HCT116 (cell line): ENCODE measurements at regions of chr14 and their contacts with region 1.

Region 1: DNA sequence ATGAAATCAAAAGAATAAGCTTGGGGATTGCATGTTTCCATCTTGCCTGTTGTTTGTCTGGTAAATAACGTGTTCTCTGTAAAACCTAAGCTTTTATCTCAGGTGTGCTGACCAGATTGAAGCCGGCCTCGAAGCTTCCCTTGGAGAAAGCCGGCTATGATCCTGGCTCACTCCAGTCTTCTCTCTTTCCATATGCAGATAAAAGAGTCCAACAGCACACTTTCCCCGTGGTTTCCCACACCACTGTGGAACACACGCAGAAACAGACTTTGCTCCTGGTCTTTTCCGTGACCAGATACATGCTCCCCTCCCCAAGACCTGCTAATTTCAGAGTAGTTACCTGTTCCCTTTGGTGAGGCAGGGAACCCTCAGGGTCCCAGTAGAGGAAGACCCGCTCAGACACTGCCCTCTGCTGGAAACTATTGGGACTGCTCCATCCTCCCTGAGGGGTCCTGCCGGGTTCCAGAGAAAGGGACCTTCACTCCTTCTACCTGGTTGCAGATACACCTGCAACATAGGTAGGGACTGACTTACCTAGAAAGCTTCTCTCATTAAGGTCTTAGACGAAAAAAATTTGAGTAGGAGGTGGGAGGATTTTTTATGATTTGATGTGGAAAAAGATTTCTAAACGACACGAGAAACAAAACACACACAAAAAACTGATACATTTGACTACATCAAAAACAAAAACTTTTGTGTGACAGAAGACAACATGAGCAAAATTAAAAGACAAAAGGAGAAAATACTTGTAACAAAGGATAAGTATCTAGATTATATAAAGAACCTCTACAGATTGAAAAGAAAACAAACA is 415.5 kb upstream of the CCDC196 start:
- DNase-seq: peak; percentile 35
- ATAC-seq: peak; percentile 96
- H3K4me3 ChIP-seq: no peak overlapping the region
- H3K27ac ChIP-seq: no peak overlapping the region
- H3K4me1 ChIP-seq: no peaks in the 10 kb centered on the region
- H3K27me3 ChIP-seq: no peaks in the 10 kb centered on the region
- CTCF ChIP-seq: peak; percentile 56 to 98 (median 94); a peak in 5 of 6 replicates
- POLR2A ChIP-seq: no peak
- RAD21 ChIP-seq: peak; percentile 81

Region 2: DNA sequence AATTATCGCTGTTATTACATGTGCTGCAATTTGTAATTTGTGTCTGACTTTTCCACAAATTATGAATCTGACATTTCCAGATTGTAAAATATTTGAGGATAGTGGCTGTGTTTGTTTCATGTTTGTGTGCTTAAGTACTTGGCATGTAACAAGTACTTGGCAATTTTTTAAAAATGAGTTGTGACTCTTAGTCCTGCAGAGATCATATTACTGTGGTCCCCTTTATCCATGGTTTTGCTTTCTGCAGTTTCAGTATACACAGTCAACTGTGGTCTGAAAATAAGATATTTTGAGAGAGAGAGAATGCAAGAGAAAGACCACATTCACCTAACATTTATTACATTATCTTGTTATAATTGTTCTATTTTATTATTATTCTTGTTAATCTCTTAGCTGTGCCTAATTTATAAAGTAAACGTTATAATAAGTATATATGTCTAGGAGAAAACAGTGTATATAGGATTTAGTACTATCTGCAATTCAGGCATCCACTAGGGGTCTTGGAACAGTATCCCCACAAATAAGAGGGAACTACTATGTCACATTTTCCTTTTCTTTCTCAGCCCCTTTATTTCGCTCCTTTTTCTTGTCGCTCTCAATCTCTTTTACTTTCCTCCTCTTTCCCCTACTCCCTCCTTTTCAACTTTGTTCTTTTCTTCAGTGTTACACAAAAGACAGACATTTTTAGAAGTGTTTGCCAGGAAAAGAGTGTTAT is 482.1 kb before region 1 on chr14:
- CTCF ChIA-PET with region 1: no interaction called
- POLR2A ChIA-PET with region 1: no interaction called
- RAD21 ChIA-PET with region 1: no interaction called
- intact Hi-C with region 1: no loop called
- DNase-seq: no peak
- ATAC-seq: no peak
- H3K4me3 ChIP-seq: no peak overlapping the region
- H3K27ac ChIP-seq: no peak overlapping the region
- H3K4me1 ChIP-seq: no peaks in the 10 kb centered on the region
- H3K27me3 ChIP-seq: no peaks in the 10 kb centered on the region
- CTCF ChIP-seq: no peak; a peak in 1 of 6 replicates
- POLR2A ChIP-seq: no peak
- RAD21 ChIP-seq: no peak

Region 3: GRCh38 chr14:65958664-65959562 is 111.8 kb before region 1 on chr14:
- CTCF ChIA-PET with region 1: interaction called, 10 read pairs
- POLR2A ChIA-PET with region 1: no interaction called
- RAD21 ChIA-PET with region 1: no interaction called
- intact Hi-C with region 1: loop called (anchors 2 kb)
- DNase-seq: peak; percentile 15
- ATAC-seq: peak; percentile 62
- H3K4me3 ChIP-seq: no peak overlapping the region
- H3K27ac ChIP-seq: no peak overlapping the region
- H3K4me1 ChIP-seq: no peaks in the 10 kb centered on the region
- H3K27me3 ChIP-seq: no peaks in the 10 kb centered on the region; the same call in 1 of the 2 replicates
- CTCF ChIP-seq: peak; percentile 23 to 63 (median 42); a peak in 3 of 6 replicates
- POLR2A ChIP-seq: no peak
- RAD21 ChIP-seq: peak; percentile 62